ENCODE measurements at regions of chr5 and their contacts with region 1.

Region 1: DNA sequence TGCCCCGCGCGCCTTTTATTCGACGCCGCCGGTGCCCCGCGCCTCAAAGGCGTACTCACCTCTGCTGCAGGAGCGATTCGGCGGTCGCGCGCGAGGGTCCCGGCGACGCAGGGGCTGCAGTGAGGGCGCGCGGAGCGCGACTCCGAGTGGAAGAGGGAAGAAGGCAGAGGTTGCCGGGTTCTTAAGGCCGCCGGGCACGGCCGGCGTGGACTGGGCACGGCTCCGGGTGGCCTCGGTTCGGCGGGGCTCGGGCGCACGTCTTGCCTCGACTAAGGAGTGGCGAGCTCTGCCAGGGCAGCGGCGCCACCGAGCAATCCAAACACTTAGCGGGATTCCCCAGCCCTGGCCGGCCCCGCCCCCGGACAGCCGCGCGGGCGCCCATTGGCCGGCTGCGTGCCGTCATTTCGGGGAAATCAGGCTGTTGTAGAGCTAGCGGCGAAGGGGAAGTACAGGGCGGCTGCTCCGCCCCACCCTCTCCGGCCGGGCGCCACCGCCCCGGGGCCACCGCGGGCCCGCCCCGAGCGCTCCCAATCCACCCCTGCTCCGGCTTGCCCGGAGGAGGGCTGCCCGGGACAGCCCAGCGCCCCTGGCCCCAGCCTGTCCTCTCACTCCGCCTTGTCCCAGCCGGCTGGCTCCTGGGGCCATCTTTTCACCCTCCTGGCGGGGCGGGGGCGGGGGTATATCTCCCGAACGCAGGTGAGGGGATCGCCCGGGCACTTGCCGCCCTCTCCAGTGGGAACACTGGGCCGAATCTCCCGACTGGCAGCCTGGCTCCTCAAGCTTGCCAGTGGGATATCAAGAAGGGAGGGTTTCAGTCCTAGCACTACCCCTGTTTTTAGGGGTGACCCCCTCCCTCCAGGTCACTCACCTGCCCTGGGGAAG is at the start of gene IRF1:
- DNase-seq: peak; percentile 98
- H3K4me3 Mint-ChIP-seq: peak within 1 kb of the TSS; percentile 91
- H3K27ac Mint-ChIP-seq: peak within 1 kb of the TSS; percentile 97
- H3K4me1 Mint-ChIP-seq: peaks cover 64% of the 10 kb centered on the region
- H3K27me3 Mint-ChIP-seq: no peaks in the 10 kb centered on the region
- total RNA-seq, gene IRF1: 84.3 to 88.4 TPM

Region 2: GRCh38 chr5:131541762-131542161 is 949.0 kb before region 1 on chr5:
- CTCF ChIA-PET with region 1: no interaction called
- intact Hi-C with region 1: loop called (anchors 5 kb)
- DNase-seq: no peak
- H3K4me3 Mint-ChIP-seq: peak overlapping the region; percentile 20
- H3K27ac Mint-ChIP-seq: peak overlapping the region; percentile 78
- H3K4me1 Mint-ChIP-seq: peaks cover 81% of the 10 kb centered on the region
- H3K27me3 Mint-ChIP-seq: no peaks in the 10 kb centered on the region

Region 3: DNA sequence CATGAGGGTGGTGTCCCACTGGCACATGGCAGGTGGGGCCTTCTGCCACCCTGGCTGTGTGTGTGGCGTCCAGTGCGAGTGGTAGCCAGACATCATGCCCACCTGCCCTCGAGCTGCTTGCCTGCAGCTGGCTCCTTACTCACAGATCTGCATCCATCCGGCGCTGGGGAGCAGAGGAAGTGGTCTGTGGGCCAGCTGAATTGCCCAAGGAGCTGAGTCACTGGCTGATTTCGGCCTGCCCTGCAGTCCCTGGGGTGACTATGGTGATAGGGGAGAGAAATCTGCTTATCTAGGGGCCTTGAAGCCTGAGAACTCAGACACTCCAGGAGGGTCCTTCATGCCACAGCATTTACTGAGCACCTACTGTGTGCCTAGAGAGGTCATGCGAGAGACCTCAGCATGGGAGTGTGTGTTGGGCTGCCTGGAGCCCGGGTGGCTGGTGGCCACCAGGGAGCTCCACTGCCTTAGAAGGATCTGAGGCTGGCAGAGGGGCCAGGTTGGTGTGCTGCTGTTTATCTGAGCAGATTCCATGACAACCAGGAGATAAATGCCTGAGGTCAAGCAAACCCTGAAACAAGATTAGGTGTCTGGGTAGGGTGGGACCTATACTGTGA is 64.1 kb before region 1 on chr5:
- CTCF ChIA-PET with region 1: interaction called, 76 read pairs
- intact Hi-C with region 1: loop called (anchors 1 kb)
- DNase-seq: peak; percentile 83
- H3K4me3 Mint-ChIP-seq: peak overlapping the region; percentile 46
- H3K27ac Mint-ChIP-seq: peak overlapping the region; percentile 95
- H3K4me1 Mint-ChIP-seq: peaks cover 94% of the 10 kb centered on the region
- H3K27me3 Mint-ChIP-seq: no peaks in the 10 kb centered on the region

Region 4: DNA sequence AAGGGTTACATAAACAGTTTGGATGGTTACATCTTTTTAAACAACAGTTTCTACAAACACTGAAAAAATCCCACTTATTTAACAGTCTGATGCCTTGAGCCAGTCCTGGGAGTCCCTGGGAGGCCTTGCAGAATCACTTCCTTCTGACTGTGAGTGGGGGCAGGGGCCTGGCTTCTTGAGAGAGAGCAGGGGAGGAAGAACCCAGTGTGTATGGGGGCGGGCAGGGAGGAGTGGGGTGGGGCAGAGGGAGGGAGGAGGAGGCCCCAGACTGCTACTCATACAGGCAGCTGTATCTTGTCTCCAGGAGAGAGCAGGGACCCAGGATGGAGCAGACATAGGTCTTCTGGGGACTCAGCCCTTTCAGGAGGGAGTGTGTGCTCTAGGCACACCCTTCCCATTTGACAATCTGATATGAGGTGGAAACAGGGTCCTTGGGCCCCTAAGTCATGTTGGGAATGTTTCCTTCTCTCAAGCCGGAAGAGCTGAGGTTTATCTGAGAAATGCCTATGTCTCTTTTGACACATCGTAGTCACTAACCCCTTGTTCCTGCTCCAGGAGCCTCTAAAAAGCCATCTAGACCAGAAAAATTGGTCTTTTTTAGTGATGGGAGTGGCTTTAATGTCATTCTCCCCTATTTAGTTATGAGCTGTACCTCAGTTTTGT is 53.0 kb before region 1 on chr5:
- CTCF ChIA-PET with region 1: interaction called, 3 read pairs
- intact Hi-C with region 1: loop called (anchors 1 kb)
- DNase-seq: peak; percentile 83
- H3K4me3 Mint-ChIP-seq: peak overlapping the region; percentile 46
- H3K27ac Mint-ChIP-seq: peak overlapping the region; percentile 81
- H3K4me1 Mint-ChIP-seq: peaks cover 83% of the 10 kb centered on the region
- H3K27me3 Mint-ChIP-seq: no peaks in the 10 kb centered on the region

Region 5: DNA sequence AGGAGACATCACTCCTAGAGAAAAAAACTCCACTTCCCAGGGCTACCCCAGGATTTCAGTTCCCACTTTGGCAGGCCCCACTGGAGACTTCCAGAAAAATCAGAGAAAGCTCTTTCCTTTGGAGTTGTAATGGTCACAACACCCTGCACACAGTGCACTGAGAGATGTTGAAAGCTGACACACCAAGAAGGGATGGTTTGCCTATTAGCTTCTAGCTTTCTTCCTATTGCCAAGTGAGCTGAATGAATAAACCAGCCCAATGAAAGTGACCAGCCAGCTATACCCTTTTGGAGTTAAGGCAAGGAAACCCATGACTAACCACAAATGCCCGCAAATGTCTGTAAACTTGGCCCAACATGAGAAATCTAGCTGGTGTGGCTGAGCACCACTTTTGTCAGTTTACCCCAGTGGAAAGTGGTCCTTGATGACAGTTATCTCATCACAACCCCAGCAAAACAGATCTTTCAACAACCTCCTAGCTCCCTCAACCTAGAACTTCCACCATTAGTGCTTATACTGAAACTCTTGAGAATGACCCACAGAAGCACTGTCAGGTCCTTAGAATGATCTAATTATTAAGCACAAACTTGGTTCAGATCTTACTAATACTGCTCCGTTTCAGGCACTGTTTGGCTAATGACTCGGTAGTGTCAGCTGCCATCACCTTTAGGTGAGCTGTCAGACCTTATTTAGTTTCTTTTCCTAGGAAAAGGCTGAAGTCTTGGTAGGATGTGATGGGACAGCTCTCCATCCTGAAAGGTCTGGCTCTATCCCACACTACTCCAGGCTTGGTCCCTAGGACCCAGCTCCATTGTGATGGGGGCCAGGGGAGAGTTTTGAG is 11.4 kb before region 1 on chr5:
- CTCF ChIA-PET with region 1: interaction called, 16 read pairs
- intact Hi-C with region 1: no loop called
- DNase-seq: no peak
- H3K4me3 Mint-ChIP-seq: no peak overlapping the region
- H3K27ac Mint-ChIP-seq: peak overlapping the region; percentile 36
- H3K4me1 Mint-ChIP-seq: peaks cover 53% of the 10 kb centered on the region
- H3K27me3 Mint-ChIP-seq: no peaks in the 10 kb centered on the region

Region 6: GRCh38 chr5:132500931-132501630 is 10.4 kb after region 1 on chr5:
- CTCF ChIA-PET with region 1: interaction called, 25 read pairs
- intact Hi-C with region 1: loop called (anchors 1 kb)
- DNase-seq: peak; percentile 86
- H3K4me3 Mint-ChIP-seq: no peak overlapping the region
- H3K27ac Mint-ChIP-seq: no peak overlapping the region
- H3K4me1 Mint-ChIP-seq: peaks cover 19% of the 10 kb centered on the region
- H3K27me3 Mint-ChIP-seq: no peaks in the 10 kb centered on the region

Region 7: DNA sequence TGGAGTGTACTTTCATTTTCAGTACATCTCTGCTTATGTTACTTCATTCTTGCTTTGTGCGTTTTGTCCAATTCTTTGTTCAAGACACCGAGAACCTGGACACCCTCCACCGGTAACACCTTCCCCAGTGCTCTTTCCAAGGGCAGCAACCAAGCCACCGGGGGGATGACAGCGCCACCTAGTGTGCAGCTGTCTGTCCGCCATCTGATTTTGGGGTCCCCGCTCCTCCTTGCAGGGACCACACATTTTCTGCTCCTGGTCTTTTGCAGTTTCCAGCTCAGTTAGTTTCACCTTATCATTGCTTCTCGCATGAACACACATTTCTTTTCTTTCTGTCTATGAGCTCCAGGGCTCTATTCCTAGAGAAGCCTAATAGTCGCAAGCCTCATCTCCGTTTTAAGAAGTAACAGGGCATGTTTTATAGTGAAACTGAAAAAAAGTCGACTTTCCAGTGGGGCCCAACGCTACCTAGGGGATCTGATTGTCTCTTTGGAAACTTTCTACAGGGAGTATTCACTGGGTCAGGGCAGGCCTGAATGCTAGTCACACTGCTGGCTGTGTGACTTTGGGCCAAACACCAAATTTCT is 969.5 kb after region 1 on chr5:
- CTCF ChIA-PET with region 1: no interaction called
- intact Hi-C with region 1: no loop called
- DNase-seq: peak; percentile 72
- H3K4me3 Mint-ChIP-seq: no peak overlapping the region
- H3K27ac Mint-ChIP-seq: no peak overlapping the region
- H3K4me1 Mint-ChIP-seq: peaks cover 2% of the 10 kb centered on the region
- H3K27me3 Mint-ChIP-seq: no peaks in the 10 kb centered on the region